PC-3 (cell line): ENCODE measurements at regions of chr16 and their contacts with region 1.

Region 1: GRCh38 chr16:14427371-14427948 is 202.6 kb downstream of the PARN start:
- DNase-seq: peak; percentile 16
- ATAC-seq: peak; percentile 31; the same call in 1 of the 2 replicates
- H3K4me3 ChIP-seq: no peak overlapping the region
- H3K27ac ChIP-seq: peak overlapping the region; percentile 27; the same call in 1 of the 2 replicates
- H3K4me1 ChIP-seq: peaks cover 20% of the 10 kb centered on the region
- H3K27me3 ChIP-seq: no peaks in the 10 kb centered on the region
- CTCF ChIP-seq: no peak

Region 2: GRCh38 chr16:14354551-14355351 is 72.7 kb before region 1 on chr16:
- CTCF ChIA-PET with region 1: interaction called, 10 read pairs
- POLR2A ChIA-PET with region 1: no interaction called
- intact Hi-C with region 1: no loop called
- DNase-seq: no peak
- ATAC-seq: peak; percentile 15; the same call in 1 of the 2 replicates
- H3K4me3 ChIP-seq: peak overlapping the region; percentile 51
- H3K27ac ChIP-seq: no peak overlapping the region
- H3K4me1 ChIP-seq: peaks cover 3% of the 10 kb centered on the region; the same call in 1 of the 2 replicates
- H3K27me3 ChIP-seq: no peaks in the 10 kb centered on the region
- CTCF ChIP-seq: no peak